ENCODE measurements at regions of chr7 and their contacts with region 1.

Region 1: GRCh38 chr7:104983578-104984539 is 30.1 kb upstream of the KMT2E start:
- DNase-seq: peak; percentile 69 to 95 (median 89)

Region 2: GRCh38 chr7:104604706-104605105 is 379.2 kb before region 1 on chr7:
- intact Hi-C with region 1: no loop called
- DNase-seq: no peak

Region 3: GRCh38 chr7:104772405-104773345 is 211.2 kb before region 1 on chr7:
- intact Hi-C with region 1: no loop called
- DNase-seq: peak in 34 of 42 donors; percentile 4 to 84 (median 50)

Region 4: GRCh38 chr7:104862719-104863118 is 121.1 kb before region 1 on chr7:
- intact Hi-C with region 1: no loop called
- DNase-seq: peak in 2 of 42 donors; percentile 17 to 19

Region 5: DNA sequence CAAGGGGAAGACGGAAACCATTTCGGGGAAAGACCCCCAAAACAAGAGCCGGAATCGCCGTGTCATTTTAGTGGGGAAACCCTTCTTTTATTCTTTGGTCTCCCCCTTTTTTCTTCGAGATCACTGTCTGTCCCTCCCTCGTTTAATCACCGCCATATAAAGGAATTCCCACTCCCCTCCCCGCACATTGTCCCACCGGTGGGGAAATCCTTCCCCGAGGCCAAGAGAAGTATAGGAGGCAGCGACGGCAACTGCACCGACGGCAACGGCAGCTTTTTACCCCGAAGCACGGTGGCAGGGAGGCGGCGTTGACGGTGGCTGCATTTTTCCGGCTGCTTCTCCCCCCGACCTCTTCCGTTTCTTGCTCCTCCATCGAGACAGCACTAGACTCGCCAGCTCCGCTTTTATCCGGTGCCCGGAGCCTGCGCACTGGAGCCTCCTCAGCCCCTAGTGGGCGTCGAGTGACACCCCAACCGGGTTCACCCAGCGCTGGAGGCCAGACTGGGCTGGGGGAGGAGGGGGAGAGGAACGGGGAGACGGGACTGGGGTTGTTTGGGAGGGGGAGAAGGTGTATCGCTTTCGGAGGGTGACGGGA is 29.5 kb after region 1 on chr7:
- intact Hi-C with region 1: loop called (anchors 1 kb)
- DNase-seq: peak; percentile 94 to 99 (median 98)